ENCODE measurements at regions of chr1 and their contacts with region 1.

Region 1: GRCh38 chr1:233376382-233377110 is 49.0 kb downstream of the MAP3K21 start:
- DNase-seq: no peak
- H3K4me3 ChIP-seq: no peak overlapping the region
- H3K27ac ChIP-seq: no peak overlapping the region
- H3K4me1 ChIP-seq: no peaks in the 10 kb centered on the region
- H3K27me3 ChIP-seq: no peaks in the 10 kb centered on the region

Region 2: GRCh38 chr1:233364695-233365539 is 11.6 kb before region 1 on chr1:
- CTCF ChIA-PET with region 1: interaction called, 13 read pairs
- POLR2A ChIA-PET with region 1: no interaction called
- DNase-seq: peak; percentile 6 to 24 (median 12)
- H3K4me3 ChIP-seq: no peak overlapping the region
- H3K27ac ChIP-seq: no peak overlapping the region
- H3K4me1 ChIP-seq: no peaks in the 10 kb centered on the region
- H3K27me3 ChIP-seq: no peaks in the 10 kb centered on the region

Region 3: GRCh38 chr1:233448109-233448689 is 71.7 kb after region 1 on chr1:
- CTCF ChIA-PET with region 1: no interaction called
- POLR2A ChIA-PET with region 1: no interaction called
- DNase-seq: no peak
- H3K4me3 ChIP-seq: no peak overlapping the region
- H3K27ac ChIP-seq: no peak overlapping the region
- H3K4me1 ChIP-seq: no peaks in the 10 kb centered on the region
- H3K27me3 ChIP-seq: peaks cover 0 to 2% (median 0%) of the 10 kb centered on the region in 5 experiments